CD8-positive, alpha-beta T cell (primary cell): ENCODE measurements at regions of chr22 and their contacts with region 1.

Region 1: GRCh38 chr22:36162127-36163034 is 1.8 kb upstream of the APOL3 start:
- DNase-seq: peak in 6 of 9 experiments; percentile 18 to 94 (median 56)
- ATAC-seq: peak; percentile 40
- H3K4me3 ChIP-seq: peak overlapping the region; percentile 12 to 14
- H3K4me3 Mint-ChIP-seq: peak overlapping the region; percentile 97
- H3K27ac ChIP-seq: peak overlapping the region; percentile 79 to 96
- H3K27ac Mint-ChIP-seq: peak overlapping the region; percentile 91
- H3K4me1 ChIP-seq: peaks cover 60% of the 10 kb centered on the region
- H3K4me1 Mint-ChIP-seq: peaks cover 90% of the 10 kb centered on the region
- H3K27me3 ChIP-seq: no peaks in the 10 kb centered on the region
- H3K27me3 Mint-ChIP-seq: no peaks in the 10 kb centered on the region
- CTCF ChIP-seq: no peak

Region 2: DNA sequence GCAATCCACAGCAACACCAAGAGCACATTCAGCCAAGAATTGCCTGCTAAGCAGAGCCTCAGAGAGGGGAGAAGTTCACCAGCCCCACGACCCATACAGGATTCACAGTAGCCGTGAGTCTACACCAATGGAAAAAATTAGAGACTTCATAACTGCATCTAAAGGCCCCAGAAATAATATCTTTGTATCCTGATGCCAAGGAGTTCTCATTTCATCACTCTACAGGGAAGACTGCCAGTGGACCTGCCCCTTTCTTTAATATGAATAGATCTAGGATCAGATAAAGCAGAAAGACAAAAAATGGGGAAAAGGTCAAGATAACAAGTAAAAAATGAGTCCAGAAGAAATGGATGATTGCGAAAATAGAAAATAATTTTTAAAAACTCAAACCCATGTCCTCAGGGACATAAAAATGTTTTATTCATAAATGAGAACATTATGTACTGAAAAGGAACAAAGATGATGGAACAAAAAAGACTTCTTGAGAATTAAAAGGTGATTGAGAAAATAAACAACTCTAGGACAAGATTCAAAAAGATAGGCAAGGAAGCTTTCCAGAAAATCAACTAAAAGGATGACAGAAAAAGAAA is 11.3 kb before region 1 on chr22:
- CTCF ChIA-PET with region 1: interaction called, 5 read pairs
- POLR2A ChIA-PET with region 1: interaction called, 4 read pairs
- intact Hi-C with region 1: loop called in 1 of 2 experiments (anchors 2 kb)
- DNase-seq: no peak
- ATAC-seq: no peak
- H3K4me3 ChIP-seq: no peak overlapping the region
- H3K4me3 Mint-ChIP-seq: no peak overlapping the region
- H3K27ac ChIP-seq: no peak overlapping the region
- H3K27ac Mint-ChIP-seq: peak overlapping the region; percentile 86
- H3K4me1 ChIP-seq: peaks cover 62% of the 10 kb centered on the region
- H3K4me1 Mint-ChIP-seq: peaks cover 85% of the 10 kb centered on the region
- H3K27me3 ChIP-seq: no peaks in the 10 kb centered on the region
- H3K27me3 Mint-ChIP-seq: no peaks in the 10 kb centered on the region
- CTCF ChIP-seq: no peak

Region 3: DNA sequence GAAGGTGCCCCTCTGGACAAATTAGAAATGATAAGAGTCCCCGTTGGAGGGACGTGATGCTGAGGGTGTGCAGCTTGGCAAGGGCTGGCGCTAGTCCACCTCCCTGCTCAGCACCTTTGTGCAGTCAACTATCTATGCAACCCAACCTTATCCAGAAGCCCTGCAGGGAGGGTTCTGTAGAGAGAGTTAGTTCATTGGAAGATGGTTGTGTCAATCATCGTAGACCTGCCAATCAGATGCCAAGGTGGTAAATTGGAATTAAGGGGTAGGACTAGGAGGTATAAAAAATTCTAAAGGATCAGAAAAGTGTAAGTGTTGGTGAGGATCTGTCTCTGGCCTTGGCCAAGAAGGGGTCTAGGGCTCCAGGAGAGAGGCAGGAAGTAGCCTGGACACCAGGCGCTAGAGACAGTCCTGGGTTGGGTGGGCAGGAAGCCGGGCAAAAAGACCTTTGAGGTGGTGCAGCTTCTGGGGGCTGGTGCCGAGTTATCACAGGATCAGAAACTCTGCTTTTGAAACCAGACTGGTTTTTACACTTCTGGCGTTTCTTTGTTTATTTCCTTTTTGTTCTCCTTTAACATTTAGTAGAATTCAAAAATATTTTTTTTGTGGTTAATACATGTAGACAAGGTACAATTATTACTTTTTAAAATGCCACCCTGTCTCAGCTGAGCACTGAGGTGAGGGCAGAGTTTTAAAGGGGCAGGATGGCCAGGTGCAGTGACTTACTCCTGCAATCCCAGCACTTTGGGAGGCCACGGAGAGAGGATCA is 1024.0 kb after region 1 on chr22:
- CTCF ChIA-PET with region 1: no interaction called
- POLR2A ChIA-PET with region 1: no interaction called
- intact Hi-C with region 1: no loop called
- DNase-seq: peak in 7 of 9 experiments; percentile 41 to 93 (median 60)
- ATAC-seq: peak; percentile 89
- H3K4me3 ChIP-seq: peak overlapping the region; percentile 13 to 16
- H3K4me3 Mint-ChIP-seq: peak overlapping the region; percentile 72
- H3K27ac ChIP-seq: peak overlapping the region; percentile 38 to 47
- H3K27ac Mint-ChIP-seq: peak overlapping the region; percentile 80
- H3K4me1 ChIP-seq: peaks cover 65% of the 10 kb centered on the region
- H3K4me1 Mint-ChIP-seq: peaks cover 60% of the 10 kb centered on the region
- H3K27me3 ChIP-seq: no peaks in the 10 kb centered on the region
- H3K27me3 Mint-ChIP-seq: no peaks in the 10 kb centered on the region
- CTCF ChIP-seq: no peak